Activated T-helper 1 cell treated with anti-CD3 and anti-CD28 coated beads, Interleukin-12 subunit alpha, Interleukin-12 subunit beta, Interleukin-2, Interleukin-4 antibody, amounts not matched to agents 30 ng/mL and 10 ng/mL and 1 ng/mL, durations not matched to agents 14 hours and 24 hours and 36 hours (primary cell): ENCODE measurements at regions of chr5 and their contacts with region 1.

Region 1: DNA sequence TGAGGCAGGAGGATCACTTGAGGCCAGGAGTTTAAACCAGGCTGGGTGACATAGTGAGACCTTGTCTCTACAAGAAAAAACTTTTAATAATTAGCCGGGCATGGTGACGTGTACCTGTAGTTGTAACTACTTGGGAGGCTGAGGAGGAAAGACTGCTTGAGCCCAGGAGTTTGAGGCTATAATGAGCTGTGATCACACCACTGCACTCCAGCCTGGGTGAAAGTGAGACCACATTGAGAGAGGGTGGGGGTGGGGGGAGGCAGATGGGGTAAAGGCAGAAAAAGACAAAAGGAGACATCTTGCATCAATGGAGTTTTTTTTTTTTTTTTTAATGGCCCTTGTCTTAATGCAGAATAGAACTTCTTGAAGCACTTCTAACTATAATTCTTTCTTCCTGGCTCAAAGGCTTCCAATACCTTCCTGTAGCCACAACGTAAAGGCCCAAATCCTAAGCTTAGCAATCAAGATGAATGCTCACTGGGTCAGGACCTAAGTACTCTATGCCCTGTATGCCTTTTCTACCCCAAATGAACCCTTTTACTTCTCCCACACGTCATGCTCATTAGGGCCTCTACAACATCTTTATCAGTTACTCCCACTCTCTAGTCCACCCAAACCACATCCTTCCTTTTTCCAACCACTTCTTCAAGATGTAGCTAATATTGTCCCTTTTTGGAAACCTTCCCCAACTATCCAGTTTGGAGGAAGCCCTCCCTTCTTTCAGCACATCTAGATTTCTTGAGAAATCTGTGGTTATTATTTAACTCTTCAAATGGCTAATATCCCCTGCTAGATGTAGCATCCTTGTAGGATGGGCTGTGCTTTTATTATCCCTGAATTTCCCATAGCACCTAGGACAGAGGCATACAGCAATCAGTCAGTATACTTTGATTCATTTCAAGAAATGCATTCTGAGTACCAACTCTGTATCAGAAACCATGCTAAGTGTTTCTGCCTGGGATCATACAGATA is 40.8 kb downstream of the CSF2 start:
- DNase-seq: no peak
- H3K4me3 Mint-ChIP-seq: no peak overlapping the region
- H3K27ac Mint-ChIP-seq: peak overlapping the region; percentile 88
- H3K4me1 Mint-ChIP-seq: peaks cover 69% of the 10 kb centered on the region
- H3K27me3 Mint-ChIP-seq: no peaks in the 10 kb centered on the region

Region 2: DNA sequence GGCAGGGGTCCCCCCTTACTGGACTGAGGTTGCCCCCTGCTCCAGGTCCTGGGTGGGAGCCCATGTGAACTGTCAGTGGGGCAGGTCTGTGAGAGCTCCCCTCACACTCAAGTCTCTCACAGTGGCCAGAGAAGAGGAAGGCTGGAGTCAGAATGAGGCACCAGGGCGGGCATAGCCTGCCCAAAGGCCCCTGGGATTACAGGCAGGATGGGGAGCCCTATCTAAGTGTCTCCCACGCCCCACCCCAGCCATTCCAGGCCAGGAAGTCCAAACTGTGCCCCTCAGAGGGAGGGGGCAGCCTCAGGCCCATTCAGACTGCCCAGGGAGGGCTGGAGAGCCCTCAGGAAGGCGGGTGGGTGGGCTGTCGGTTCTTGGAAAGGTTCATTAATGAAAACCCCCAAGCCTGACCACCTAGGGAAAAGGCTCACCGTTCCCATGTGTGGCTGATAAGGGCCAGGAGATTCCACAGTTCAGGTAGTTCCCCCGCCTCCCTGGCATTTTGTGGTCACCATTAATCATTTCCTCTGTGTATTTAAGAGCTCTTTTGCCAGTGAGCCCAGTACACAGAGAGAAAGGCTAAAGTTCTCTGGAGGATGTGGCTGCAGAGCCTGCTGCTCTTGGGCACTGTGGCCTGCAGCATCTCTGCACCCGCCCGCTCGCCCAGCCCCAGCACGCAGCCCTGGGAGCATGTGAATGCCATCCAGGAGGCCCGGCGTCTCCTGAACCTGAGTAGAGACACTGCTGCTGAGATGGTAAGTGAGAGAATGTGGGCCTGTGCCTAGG is 41.0 kb before region 1 on chr5 and contains the start of gene CSF2:
- intact Hi-C with region 1: loop called (anchors 1 kb)
- DNase-seq: no peak
- H3K4me3 Mint-ChIP-seq: peak within 1 kb of the TSS; percentile 90
- H3K27ac Mint-ChIP-seq: peak within 1 kb of the TSS; percentile 97
- H3K4me1 Mint-ChIP-seq: peaks cover 92% of the 10 kb centered on the region
- H3K27me3 Mint-ChIP-seq: peaks cover 1% of the 10 kb centered on the region
- total RNA-seq, gene CSF2: 1,648 and 1,678 TPM in 2 replicates

Region 3: DNA sequence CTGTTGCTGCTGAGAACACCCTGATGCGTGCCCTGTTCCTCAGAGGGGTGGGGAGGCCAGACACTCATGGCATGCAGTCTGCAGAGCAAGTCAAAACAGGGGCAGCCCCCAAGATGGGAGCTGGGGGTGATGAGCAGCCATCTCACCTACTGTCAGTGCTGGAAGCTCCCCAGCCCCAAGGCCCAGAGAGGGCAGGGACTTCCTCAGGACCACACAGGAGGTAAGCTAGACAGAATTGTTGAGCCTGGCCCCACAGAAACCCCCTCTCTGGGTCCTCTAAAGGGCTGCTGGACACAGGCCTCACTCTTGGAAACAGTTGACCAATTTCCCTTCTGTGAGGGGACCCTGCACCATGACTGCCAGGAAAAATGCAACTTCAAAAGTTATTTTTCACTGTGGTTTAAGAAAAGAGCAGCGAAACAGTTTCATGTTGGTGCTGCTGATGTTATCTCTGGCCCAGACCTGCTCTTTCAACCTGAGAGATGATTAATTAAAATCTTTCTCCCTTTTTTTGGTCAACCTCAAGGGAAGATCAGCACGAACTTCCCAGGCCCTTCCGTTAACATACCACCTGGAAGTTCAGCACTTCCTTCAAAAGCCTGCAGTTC is 31.3 kb before region 1 on chr5:
- intact Hi-C with region 1: loop called (anchors 1 kb)
- DNase-seq: no peak
- H3K4me3 Mint-ChIP-seq: peak overlapping the region; percentile 39
- H3K27ac Mint-ChIP-seq: peak overlapping the region; percentile 95
- H3K4me1 Mint-ChIP-seq: peaks cover 76% of the 10 kb centered on the region
- H3K27me3 Mint-ChIP-seq: peaks cover 1% of the 10 kb centered on the region